Aorta (tissue), 5 donors: ENCODE measurements at regions of chr2 and their contacts with region 1.

Region 1: GRCh38 chr2:202178342-202178958 is 59.9 kb downstream of the SUMO1 start:
- DNase-seq: no peak
- ATAC-seq: peak; percentile 87
- H3K4me3 ChIP-seq: no peak overlapping the region
- H3K27ac ChIP-seq: no peak overlapping the region
- H3K4me1 ChIP-seq: no peaks in the 10 kb centered on the region
- H3K27me3 ChIP-seq: no peaks in the 10 kb centered on the region

Region 2: DNA sequence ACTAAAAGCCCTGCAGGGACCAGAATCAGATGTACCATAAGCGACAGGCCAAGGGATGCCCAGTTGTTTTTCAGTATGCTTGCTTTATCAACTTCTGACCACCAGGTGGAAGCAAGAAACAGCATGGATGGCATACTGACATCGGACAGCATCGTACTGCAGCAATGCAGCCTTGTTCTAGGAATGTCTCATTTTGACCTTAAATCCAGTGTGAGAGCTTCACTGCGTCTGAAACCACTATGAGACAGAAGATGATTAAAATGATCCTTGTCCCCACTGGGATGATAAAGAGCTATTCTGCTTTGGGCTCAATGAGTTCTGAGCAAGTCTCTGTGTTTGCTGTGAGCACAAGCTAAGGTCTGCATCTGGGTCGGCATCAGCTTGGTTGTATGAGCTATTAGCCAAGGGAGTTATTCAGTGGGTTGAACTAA is 317.8 kb before region 1 on chr2:
- intact Hi-C with region 1: loop called (anchors 2 kb)
- DNase-seq: no peak
- ATAC-seq: peak; percentile 88
- H3K4me3 ChIP-seq: no peak overlapping the region
- H3K27ac ChIP-seq: no peak overlapping the region
- H3K4me1 ChIP-seq: no peaks in the 10 kb centered on the region
- H3K27me3 ChIP-seq: peaks cover 0 to 2% of the 10 kb centered on the region in 2 donors

Region 3: DNA sequence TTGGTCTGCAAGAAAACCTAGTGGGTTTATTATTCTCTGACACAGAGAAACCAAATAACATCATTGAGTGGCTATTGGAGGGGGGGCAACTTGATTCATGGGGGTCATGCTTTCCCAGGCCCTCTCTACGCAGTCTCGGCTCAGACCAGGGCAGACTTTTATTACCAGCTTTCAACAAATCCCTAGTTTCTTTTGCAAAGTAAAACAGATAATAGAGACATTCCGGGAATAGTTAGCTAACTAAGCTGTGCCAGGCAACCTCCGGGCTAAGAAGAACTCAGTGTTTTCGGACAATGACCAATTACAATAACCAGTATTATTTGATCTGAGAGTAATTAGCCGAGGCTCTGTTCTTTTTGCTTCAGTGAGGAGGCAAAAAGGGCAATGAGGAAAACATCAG is 305.9 kb before region 1 on chr2:
- intact Hi-C with region 1: no loop called
- DNase-seq: no peak
- ATAC-seq: no peak
- H3K4me3 ChIP-seq: no peak overlapping the region
- H3K27ac ChIP-seq: no peak overlapping the region
- H3K4me1 ChIP-seq: no peaks in the 10 kb centered on the region
- H3K27me3 ChIP-seq: no peaks in the 10 kb centered on the region

Region 4: GRCh38 chr2:202743613-202744012 is 565.2 kb after region 1 on chr2:
- intact Hi-C with region 1: no loop called
- DNase-seq: no peak
- ATAC-seq: no peak
- H3K4me3 ChIP-seq: no peak overlapping the region
- H3K27ac ChIP-seq: no peak overlapping the region
- H3K4me1 ChIP-seq: no peaks in the 10 kb centered on the region
- H3K27me3 ChIP-seq: no peaks in the 10 kb centered on the region